ENCODE measurements at regions of chr10 and their contacts with region 1.

Region 1: DNA sequence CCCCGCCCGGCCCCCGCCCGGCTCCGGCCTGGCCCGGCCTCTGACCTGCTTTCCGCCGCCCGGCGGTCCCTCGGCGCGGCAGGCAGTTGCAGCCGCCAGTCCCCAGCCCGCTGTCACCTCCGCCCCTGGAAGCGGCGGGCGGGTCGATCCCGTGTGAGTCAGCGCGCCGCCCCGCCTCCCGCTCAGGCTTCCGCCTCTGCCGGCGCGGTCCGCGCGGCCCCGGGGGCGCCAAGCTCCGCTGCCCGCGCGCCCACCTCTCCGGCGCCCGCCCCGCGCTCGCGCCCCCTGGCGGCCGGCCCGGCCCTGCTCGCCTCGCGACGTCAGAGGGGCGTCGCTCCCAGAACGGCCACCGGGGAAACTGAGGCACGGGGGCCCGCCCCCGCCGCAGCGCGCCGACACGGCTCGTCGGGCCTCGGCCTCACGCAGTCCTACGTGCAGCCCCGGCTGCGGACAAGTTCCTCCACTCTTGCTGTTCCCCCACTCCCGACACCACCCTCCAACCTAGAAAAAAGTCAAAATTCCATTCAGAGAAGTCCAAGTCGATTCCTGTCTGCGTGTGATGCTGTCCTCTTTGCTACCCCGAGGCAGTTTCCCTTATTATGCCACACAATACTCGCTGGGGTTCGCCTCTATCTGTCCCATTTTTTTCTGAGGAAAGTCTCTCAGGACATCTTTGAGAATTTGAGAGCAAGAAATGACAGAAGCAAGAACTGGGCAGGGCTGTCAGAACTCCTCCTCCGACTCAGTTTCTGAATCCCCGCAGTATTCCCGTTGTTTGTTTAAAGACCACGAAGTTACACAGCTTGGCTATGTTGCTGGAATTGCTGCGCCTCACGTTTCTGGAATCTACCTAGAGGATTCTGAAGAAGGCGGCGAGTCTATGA is at the start of gene DNMBP:
- DNase-seq: peak; percentile 61 to 87 (median 79)
- ATAC-seq: peak; percentile 95
- H3K4me3 ChIP-seq: peak within 1 kb of the TSS; percentile 69
- H3K4me3 Mint-ChIP-seq: peak within 1 kb of the TSS; percentile 85 to 98 (median 96)
- H3K27ac ChIP-seq: peak within 1 kb of the TSS; percentile 50
- H3K27ac Mint-ChIP-seq: peak within 1 kb of the TSS; percentile 40 to 96 (median 82)
- H3K4me1 ChIP-seq: peaks cover 10 to 12% of the 10 kb centered on the region in 2 donors
- H3K4me1 Mint-ChIP-seq: peaks cover 8 to 51% (median 40%) of the 10 kb centered on the region in 7 donors
- H3K27me3 ChIP-seq: no peaks in the 10 kb centered on the region
- H3K27me3 Mint-ChIP-seq: peaks cover 0 to 35% (median 0%) of the 10 kb centered on the region in 5 donors
- total RNA-seq, gene DNMBP: 2.8 to 8.5 (median 4.4) TPM

Region 2: DNA sequence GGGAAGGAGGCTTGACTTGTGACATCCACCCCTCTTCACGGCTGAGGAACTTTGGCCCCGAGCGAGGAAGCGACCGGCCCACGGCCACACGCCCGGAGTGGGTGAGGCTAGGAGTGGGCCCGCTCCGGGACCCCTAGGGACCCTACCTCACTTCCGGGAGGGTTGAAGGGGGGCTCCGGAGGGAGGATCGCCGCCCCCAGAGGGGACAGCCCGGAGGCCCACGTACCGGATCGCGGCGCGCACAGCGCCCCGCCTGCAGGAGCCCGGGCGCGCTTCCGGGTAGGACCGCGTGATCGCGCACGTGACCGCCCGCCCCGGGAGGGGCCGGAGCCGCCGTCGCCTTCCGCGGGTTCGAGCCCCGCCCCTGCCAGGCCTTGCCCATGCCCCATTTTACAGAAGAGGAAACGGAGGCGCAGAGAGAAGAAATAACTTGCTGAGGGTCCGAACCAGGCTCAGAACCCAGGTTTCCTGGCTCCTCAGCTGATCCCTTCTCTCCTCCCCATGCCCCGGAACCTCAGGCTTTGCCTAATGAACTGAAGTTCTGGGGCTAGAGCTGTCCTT is 1563.3 kb before region 1 on chr10 and contains the start of gene HPS1:
- CTCF ChIA-PET with region 1: no interaction called
- POLR2A ChIA-PET with region 1: no interaction called
- intact Hi-C with region 1: loop called in 1 of 2 experiments (anchors 5 kb)
- DNase-seq: peak; percentile 60 to 88 (median 79)
- ATAC-seq: peak; percentile 93
- H3K4me3 ChIP-seq: peak within 1 kb of the TSS; percentile 87
- H3K4me3 Mint-ChIP-seq: peak within 1 kb of the TSS; percentile 76 to 96 (median 92)
- H3K27ac ChIP-seq: peak within 1 kb of the TSS; percentile 88
- H3K27ac Mint-ChIP-seq: peak within 1 kb of the TSS; percentile 75 to 97 (median 89)
- H3K4me1 ChIP-seq: peaks cover 19 to 21% of the 10 kb centered on the region in 2 donors
- H3K4me1 Mint-ChIP-seq: peaks cover 18 to 56% (median 44%) of the 10 kb centered on the region in 7 donors
- H3K27me3 ChIP-seq: no peaks in the 10 kb centered on the region
- H3K27me3 Mint-ChIP-seq: peaks cover 0 to 20% (median 6%) of the 10 kb centered on the region in 5 donors
- total RNA-seq, gene HPS1: 68.5 to 107 (median 90.9) TPM

Region 3: GRCh38 chr10:99620713-99621453 is 389.2 kb before region 1 on chr10:
- CTCF ChIA-PET with region 1: no interaction called
- POLR2A ChIA-PET with region 1: no interaction called
- intact Hi-C with region 1: loop called (anchors 1 to 10 kb)
- DNase-seq: peak in 7 of 9 donors; percentile 66 to 86 (median 73)
- ATAC-seq: peak; percentile 89
- H3K4me3 ChIP-seq: peak overlapping the region; percentile 85
- H3K4me3 Mint-ChIP-seq: peak overlapping the region; percentile 83 to 93 (median 88)
- H3K27ac ChIP-seq: peak overlapping the region; percentile 99
- H3K27ac Mint-ChIP-seq: peak overlapping the region; percentile 75 to 98 (median 94)
- H3K4me1 ChIP-seq: peaks cover 20 to 29% of the 10 kb centered on the region in 2 donors
- H3K4me1 Mint-ChIP-seq: peaks cover 27 to 53% (median 45%) of the 10 kb centered on the region in 7 donors
- H3K27me3 ChIP-seq: no peaks in the 10 kb centered on the region
- H3K27me3 Mint-ChIP-seq: no peaks in the 10 kb centered on the region

Region 4: DNA sequence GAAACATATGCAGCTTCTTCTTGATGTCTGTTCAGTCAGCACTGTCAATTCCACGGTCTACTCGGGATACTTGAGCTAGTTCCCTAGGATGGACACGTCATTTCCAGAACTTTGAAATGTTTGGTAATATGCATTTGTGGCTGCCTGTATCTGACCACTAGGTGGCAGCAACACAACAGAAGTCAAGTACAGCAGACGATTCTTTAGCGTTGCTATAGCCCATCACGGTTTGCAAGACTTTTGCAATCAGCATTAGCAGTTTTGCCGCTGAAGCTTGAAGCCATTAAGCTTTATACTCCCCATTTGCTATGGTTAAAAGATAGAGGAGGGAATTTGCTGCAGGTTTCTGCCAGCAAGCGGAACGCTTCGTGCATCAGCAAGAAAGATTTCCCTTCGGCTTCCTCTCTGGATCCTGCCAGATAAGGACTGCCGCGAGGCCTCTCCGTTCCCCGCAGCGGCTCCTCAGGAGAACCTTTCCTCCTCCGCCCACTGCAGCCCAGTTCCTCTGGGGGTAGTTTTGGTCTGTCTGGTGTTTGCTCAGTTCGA is 164.1 kb before region 1 on chr10:
- CTCF ChIA-PET with region 1: interaction called, 10 read pairs
- POLR2A ChIA-PET with region 1: interaction called, 3 read pairs
- intact Hi-C with region 1: loop called (anchors 1 kb)
- DNase-seq: peak; percentile 22 to 78 (median 71)
- ATAC-seq: peak; percentile 94
- H3K4me3 ChIP-seq: no peak overlapping the region
- H3K4me3 Mint-ChIP-seq: peak overlapping the region in 9 of 10 donors; percentile 39 to 59 (median 50)
- H3K27ac ChIP-seq: no peak overlapping the region
- H3K27ac Mint-ChIP-seq: no peak overlapping the region
- H3K4me1 ChIP-seq: peaks cover 0 to 5% of the 10 kb centered on the region in 2 donors
- H3K4me1 Mint-ChIP-seq: peaks cover 0 to 8% (median 5%) of the 10 kb centered on the region in 7 donors
- H3K27me3 ChIP-seq: no peaks in the 10 kb centered on the region
- H3K27me3 Mint-ChIP-seq: peaks cover 0 to 3% (median 0%) of the 10 kb centered on the region in 5 donors

Region 5: DNA sequence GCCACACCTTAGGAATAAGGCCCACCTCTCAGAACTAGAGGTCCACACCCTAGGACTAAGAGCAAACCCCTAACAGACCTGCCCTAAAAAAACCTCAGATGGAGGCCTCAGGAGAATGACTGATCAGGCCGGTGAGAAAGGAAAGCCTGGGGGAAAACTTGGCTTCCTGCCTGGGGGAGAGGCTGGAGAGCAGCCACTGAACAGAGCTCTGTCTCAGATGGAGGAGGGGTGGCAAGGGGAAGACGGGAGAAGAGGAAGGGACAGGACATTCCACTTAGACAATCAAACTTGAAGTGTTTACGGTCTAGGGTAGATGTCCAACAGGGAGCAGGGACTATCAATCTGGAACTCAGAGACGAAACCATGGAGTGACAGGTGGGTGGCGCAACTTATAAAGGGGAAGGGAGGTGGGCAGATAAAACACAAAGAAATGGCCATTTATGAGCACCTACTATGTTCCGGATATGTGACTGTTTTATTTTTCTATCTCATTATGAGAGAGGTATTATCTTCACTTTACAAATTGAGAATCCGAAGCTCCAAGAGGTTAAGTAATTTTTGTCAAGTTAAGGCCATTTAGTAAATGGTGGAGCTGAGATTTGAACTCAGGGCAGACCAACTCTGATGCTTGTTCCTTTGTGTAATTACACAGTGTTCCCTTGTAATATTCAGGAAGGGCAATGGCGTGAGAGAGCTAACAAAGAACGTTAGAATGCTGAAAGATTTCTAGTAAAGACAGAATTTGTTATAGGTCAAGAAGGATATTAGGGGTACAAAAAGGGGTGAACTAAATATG is 82.9 kb before region 1 on chr10:
- CTCF ChIA-PET with region 1: no interaction called
- POLR2A ChIA-PET with region 1: no interaction called
- intact Hi-C with region 1: no loop called
- DNase-seq: no peak
- ATAC-seq: no peak
- H3K4me3 ChIP-seq: no peak overlapping the region
- H3K4me3 Mint-ChIP-seq: no peak overlapping the region
- H3K27ac ChIP-seq: no peak overlapping the region
- H3K27ac Mint-ChIP-seq: peak overlapping the region in 1 of 9 donors; percentile 9
- H3K4me1 ChIP-seq: no peaks in the 10 kb centered on the region
- H3K4me1 Mint-ChIP-seq: peaks cover 7 to 15% (median 12%) of the 10 kb centered on the region in 7 donors
- H3K27me3 ChIP-seq: no peaks in the 10 kb centered on the region
- H3K27me3 Mint-ChIP-seq: no peaks in the 10 kb centered on the region

Region 6: GRCh38 chr10:99993701-99994689 is 16.0 kb before region 1 on chr10:
- CTCF ChIA-PET with region 1: interaction called, 5 read pairs
- POLR2A ChIA-PET with region 1: no interaction called
- intact Hi-C with region 1: loop called (anchors 1 to 2 kb)
- DNase-seq: peak; percentile 11 to 72 (median 54)
- ATAC-seq: peak; percentile 93
- H3K4me3 ChIP-seq: no peak overlapping the region
- H3K4me3 Mint-ChIP-seq: peak overlapping the region; percentile 38 to 78 (median 64)
- H3K27ac ChIP-seq: no peak overlapping the region
- H3K27ac Mint-ChIP-seq: peak overlapping the region in 8 of 9 donors; percentile 14 to 84 (median 36)
- H3K4me1 ChIP-seq: no peaks in the 10 kb centered on the region
- H3K4me1 Mint-ChIP-seq: peaks cover 17 to 24% (median 20%) of the 10 kb centered on the region in 7 donors
- H3K27me3 ChIP-seq: no peaks in the 10 kb centered on the region
- H3K27me3 Mint-ChIP-seq: no peaks in the 10 kb centered on the region

Region 7: DNA sequence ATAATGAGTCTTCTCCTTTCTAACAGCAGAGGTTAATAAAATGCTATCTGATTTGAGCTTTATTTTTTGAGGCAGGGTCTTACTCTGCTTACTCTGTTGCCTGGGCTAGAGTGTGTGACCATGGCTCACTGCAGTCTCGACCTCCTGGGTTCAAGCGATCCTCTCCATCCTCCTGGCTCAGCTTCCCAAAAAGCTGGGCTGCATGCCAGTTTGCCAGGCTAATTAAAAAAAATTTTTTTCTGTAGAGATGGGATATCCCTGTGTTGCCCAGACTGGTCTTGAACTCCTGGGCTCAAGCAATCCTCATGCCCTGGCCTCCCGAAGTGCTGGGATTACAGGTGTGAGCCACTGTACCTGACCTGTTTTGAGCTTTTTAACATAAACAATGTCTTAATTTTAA is 393.7 kb after region 1 on chr10:
- CTCF ChIA-PET with region 1: no interaction called
- POLR2A ChIA-PET with region 1: no interaction called
- intact Hi-C with region 1: no loop called
- DNase-seq: no peak
- ATAC-seq: no peak
- H3K4me3 ChIP-seq: no peak overlapping the region
- H3K4me3 Mint-ChIP-seq: no peak overlapping the region
- H3K27ac ChIP-seq: no peak overlapping the region
- H3K27ac Mint-ChIP-seq: no peak overlapping the region
- H3K4me1 ChIP-seq: no peaks in the 10 kb centered on the region
- H3K4me1 Mint-ChIP-seq: no peaks in the 10 kb centered on the region
- H3K27me3 ChIP-seq: no peaks in the 10 kb centered on the region
- H3K27me3 Mint-ChIP-seq: peaks cover 0 to 6% (median 2%) of the 10 kb centered on the region in 5 donors